Ascending aorta (tissue), 2 donors: ENCODE measurements at regions of chr12 and their contacts with region 1.

Region 1: GRCh38 chr12:47904713-47905310 is at the start of gene VDR:
- DNase-seq: peak; percentile 59 to 89
- H3K4me3 ChIP-seq: peak within 1 kb of the TSS; percentile 61 to 78
- H3K27ac ChIP-seq: peak within 1 kb of the TSS; percentile 47 to 65
- H3K4me1 ChIP-seq: peaks cover 0 to 21% of the 10 kb centered on the region in 2 donors
- H3K27me3 ChIP-seq: no peaks in the 10 kb centered on the region
- CTCF ChIP-seq: peak in 1 of 3 experiments; percentile 10
- total RNA-seq, gene VDR: 13.1 TPM

Region 2: DNA sequence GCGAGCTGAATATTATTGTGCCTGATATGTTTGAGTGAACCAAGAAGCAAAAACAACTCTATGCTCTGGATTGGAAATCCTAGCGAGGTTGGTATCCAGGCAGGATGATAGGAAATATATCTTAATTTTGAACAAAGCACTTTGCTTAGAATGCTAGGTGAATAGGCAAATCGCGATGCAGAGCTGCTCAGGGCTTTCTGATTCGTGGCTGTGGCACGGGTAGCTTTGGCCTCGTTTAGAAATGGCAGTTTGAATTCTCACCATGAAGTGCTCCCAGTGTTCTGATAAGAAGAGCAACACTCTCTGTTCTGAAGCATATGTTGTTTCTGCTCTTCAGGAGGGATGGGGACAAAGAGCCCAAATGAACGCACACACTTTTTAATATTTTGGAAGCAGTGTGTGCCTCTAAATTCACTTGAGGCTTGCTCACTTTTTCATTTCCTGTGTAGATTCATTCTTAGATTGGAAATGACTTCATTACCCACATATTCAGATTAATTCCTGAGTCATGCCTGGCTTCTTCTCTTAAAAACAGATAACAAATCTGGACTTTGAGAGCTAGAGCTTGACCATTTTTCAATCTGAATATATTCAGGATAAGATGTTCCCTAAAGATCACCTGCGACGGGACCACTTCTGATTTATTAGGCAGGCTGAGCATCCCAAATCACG is 399.9 kb before region 1 on chr12:
- intact Hi-C with region 1: no loop called
- DNase-seq: no peak
- H3K4me3 ChIP-seq: peak overlapping the region in 1 of 2 donors; percentile 36
- H3K27ac ChIP-seq: peak overlapping the region; percentile 76 to 82
- H3K4me1 ChIP-seq: peaks cover 0 to 12% of the 10 kb centered on the region in 2 donors
- H3K27me3 ChIP-seq: no peaks in the 10 kb centered on the region
- CTCF ChIP-seq: no peak

Region 3: DNA sequence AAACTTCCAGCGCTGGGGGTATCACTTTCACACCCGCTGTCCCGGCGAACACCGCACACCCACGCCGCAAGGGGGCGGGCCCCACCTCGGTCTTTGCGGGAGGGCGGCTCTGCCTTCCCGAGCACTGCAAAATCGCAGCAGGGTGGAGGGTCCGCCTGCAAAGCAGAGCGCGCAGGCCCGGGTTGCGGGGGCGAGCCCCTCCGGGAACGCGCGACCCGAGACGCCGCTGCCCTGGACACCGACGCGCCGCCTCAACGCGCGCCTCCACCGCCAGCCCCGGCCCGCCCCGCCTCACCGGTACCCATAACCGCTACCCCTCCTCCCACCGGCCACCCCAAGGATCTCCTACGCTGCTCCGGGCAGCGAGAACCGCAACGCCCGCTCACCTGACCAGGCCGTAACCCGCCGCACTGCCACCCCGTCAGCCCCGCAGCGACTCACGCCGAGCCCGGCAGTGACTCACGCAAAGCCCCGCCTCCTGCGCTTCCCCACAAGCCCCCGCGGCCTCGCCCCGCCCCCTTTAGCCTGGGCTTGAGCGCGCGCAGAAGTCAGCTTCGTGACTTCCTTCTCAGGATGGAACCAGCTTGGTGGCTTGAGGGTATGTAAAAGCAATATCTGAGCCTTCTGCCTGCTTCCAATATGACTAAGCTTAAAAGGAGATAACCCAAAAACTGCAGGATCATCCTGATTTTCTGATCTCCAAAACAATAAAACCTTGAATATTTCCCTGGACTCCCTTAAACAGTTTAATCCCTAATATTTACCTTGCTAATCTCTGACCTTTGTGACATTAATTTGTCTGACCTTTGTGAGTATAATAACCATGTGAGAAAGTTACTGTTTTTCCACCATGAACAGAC is 199.0 kb before region 1 on chr12 and contains the start of gene RPAP3:
- intact Hi-C with region 1: loop called (anchors 5 kb)
- DNase-seq: peak; percentile 85 to 98
- H3K4me3 ChIP-seq: peak within 1 kb of the TSS; percentile 94 to 95
- H3K27ac ChIP-seq: peak within 1 kb of the TSS; percentile 78 to 94
- H3K4me1 ChIP-seq: peaks cover 0 to 6% of the 10 kb centered on the region in 2 donors
- H3K27me3 ChIP-seq: no peaks in the 10 kb centered on the region
- CTCF ChIP-seq: peak; percentile 50 to 68 (median 66)
- total RNA-seq, gene RPAP3: 8.1 TPM

Region 4: GRCh38 chr12:47963340-47964040 is 58.7 kb after region 1 on chr12 and contains the start of gene TMEM106C:
- intact Hi-C with region 1: loop called (anchors 2 kb)
- DNase-seq: peak; percentile 48 to 95
- H3K4me3 ChIP-seq: peak within 1 kb of the TSS; percentile 81 to 96
- H3K27ac ChIP-seq: peak within 1 kb of the TSS; percentile 53 to 60
- H3K4me1 ChIP-seq: peaks cover 3 to 16% of the 10 kb centered on the region in 2 donors
- H3K27me3 ChIP-seq: no peaks in the 10 kb centered on the region
- CTCF ChIP-seq: peak; percentile 91 to 99 (median 98)
- total RNA-seq, gene TMEM106C: 120 TPM